ENCODE measurements at regions of chr6 and their contacts with region 1.

Region 1: DNA sequence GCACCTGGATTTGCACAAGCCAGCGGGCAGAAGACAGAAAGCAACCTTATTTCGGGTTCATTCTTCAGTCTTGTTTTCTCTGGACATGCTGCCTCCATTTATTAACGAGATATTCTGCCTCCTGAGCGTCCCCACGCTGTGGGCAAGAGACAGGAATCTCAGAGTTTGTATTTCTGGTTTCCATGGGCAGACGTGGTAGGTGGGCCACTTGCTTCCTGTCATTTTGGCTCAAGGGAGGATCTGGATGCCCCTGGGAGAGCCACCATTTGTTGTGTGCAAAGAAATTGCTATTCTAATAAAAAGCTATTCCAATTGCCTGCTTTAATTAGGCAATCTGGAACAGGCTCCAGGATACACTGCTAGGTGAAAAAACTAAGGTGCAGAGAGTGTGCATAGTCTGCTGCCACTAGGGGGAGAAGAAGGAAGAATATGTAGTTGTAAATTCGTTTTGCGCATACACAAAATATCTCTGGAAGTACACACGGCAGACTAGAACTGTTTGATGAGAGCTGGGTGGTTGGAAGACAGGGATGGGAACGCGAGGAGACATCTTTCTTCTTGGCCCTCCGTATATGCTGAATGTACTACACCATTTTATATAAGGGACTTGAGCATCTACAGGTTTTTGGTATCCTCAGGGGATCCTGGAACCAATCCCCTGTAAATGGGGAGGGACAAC is 30.1 kb upstream of the SLC16A10 start:
- H3K4me3 ChIP-seq: no peak overlapping the region
- H3K27ac ChIP-seq: no peak overlapping the region
- H3K4me1 ChIP-seq: no peaks in the 10 kb centered on the region
- CTCF ChIP-seq: peak; percentile 51; the same call in 1 of the 2 replicates

Region 2: GRCh38 chr6:110315869-110316398 is 741.3 kb before region 1 on chr6:
- CTCF ChIA-PET with region 1: no interaction called
- POLR2A ChIA-PET with region 1: no interaction called
- H3K4me3 ChIP-seq: no peak overlapping the region
- H3K27ac ChIP-seq: no peak overlapping the region
- H3K4me1 ChIP-seq: peaks cover 3% of the 10 kb centered on the region; the same call in 1 of the 2 replicates
- CTCF ChIP-seq: no peak

Region 3: DNA sequence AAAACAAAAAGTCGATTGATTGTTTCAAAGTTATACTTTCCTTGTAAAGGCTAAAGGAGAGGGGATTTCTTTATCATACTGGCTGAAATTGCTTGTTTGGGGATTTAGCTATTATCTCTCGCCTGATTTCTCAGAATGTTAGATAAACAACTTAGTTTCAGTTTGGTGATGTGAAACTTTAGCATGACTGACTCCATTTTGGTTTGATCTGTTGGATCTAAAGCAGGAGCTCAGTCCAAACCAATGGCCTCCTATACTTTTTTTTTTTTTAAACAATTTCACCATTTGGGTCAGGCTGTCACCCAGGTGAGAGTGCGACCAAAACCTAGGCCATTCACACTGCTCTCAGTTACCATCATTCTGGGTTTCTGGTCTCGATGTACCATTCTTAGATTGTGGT is 15.3 kb before region 1 on chr6:
- CTCF ChIA-PET with region 1: interaction called, 11 read pairs
- POLR2A ChIA-PET with region 1: no interaction called
- H3K4me3 ChIP-seq: no peak overlapping the region
- H3K27ac ChIP-seq: no peak overlapping the region
- H3K4me1 ChIP-seq: no peaks in the 10 kb centered on the region
- CTCF ChIP-seq: no peak

Region 4: DNA sequence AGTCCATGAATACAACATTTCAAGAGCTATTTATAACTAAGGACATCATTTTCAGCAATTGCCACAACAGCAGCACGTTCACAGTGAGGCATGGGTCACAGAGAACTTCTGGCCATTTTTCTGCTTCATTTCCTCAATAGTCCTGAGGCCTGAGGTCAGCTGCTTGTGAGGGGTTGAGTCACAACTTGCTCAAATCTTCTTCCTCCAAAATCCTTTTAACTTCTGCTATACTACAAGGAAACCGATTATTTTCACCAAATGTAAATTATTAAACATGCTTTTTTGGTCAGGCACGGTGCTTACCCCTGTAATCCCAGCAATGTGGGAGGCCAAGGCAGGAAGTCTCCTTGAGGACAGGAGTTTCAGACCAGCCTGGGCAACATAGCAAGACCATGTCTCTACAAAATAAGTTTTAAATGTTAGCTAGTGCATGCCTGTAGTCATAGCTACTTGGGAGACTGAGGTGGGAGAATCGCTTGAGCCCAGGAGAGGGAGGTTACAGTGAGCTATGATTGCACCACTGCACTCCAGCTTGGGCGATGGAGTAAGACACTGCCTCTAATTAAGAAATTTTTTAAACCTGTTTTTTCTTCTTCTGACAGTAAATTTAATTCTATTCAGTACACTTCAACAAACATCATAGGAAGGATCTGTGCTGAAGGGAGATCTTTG is 18.9 kb after region 1 on chr6:
- CTCF ChIA-PET with region 1: interaction called, 15 read pairs
- POLR2A ChIA-PET with region 1: no interaction called
- H3K4me3 ChIP-seq: no peak overlapping the region
- H3K27ac ChIP-seq: no peak overlapping the region
- H3K4me1 ChIP-seq: no peaks in the 10 kb centered on the region; the same call in 1 of the 2 replicates
- CTCF ChIP-seq: no peak

Region 5: GRCh38 chr6:111210194-111210728 is 153.0 kb after region 1 on chr6:
- CTCF ChIA-PET with region 1: interaction called, 30 read pairs
- POLR2A ChIA-PET with region 1: no interaction called
- H3K4me3 ChIP-seq: no peak overlapping the region
- H3K27ac ChIP-seq: no peak overlapping the region
- H3K4me1 ChIP-seq: no peaks in the 10 kb centered on the region
- CTCF ChIP-seq: no peak

Measured in HEK293 (cell line).